BJ (cell line): ENCODE measurements at regions of chr10 and their contacts with region 1.

Region 1: GRCh38 chr10:17617031-17617911 is at the start of gene HACD1:
- DNase-seq: no peak
- H3K4me3 ChIP-seq: peak within 1 kb of the TSS; percentile 82
- H3K27me3 ChIP-seq: no peaks in the 10 kb centered on the region
- CTCF ChIP-seq: peak; percentile 47
- polyA plus RNA-seq, gene HACD1: 45.4 and 113 TPM in 2 replicates

Region 2: GRCh38 chr10:17599089-17599488 is 18.2 kb before region 1 on chr10:
- CTCF ChIA-PET with region 1: no interaction called
- POLR2A ChIA-PET with region 1: no interaction called
- DNase-seq: no peak
- H3K4me3 ChIP-seq: no peak overlapping the region
- H3K27me3 ChIP-seq: no peaks in the 10 kb centered on the region
- CTCF ChIP-seq: 0 out of 2 replicates have a peak, but pooled peaks have one; percentile 22

Region 3: DNA sequence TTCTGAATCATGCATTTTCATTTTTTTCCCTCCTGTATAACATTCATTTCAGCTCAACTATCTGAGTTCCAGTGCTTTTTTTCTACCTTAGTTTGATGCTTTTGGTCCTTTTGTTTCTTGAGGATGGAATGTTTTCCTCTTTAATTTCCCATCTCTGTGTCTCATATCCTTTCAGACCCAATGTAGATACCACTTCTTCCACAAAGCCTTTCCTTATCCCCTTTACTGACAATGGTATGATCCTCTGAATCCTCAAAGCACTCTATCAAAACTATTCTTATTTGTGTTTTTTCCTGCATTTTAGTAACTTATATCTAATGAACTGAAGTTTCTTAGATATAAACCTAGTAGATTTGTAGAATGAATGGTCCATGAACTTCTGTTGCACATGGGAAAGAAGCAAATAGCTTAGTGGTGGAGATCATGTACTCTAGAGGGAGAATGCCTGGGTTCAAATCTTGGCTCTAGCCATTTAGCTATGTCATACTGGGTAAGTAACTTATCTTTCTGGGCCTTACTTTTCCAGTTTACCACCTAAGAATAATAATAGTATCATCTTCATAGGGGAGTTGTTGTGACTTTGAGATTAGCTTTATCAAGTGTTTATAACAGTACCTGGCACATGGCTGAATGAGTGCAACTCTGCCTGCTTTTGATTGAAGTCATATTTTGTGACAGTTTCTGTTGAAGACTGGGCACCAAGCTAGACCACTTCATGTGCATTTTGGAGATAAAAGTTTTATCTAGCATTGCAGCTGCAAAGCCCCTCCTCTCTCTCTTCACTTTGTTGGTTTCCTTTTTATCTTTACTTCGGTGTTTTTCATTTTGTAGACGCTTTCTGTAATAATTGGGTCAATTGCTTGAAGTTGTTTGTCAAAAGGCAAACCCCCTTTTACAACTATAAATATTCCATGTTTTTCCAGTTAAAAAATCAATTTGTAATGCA is 45.2 kb after region 1 on chr10:
- CTCF ChIA-PET with region 1: interaction called, 3 read pairs
- POLR2A ChIA-PET with region 1: interaction called, 15 read pairs
- DNase-seq: no peak
- H3K4me3 ChIP-seq: no peak overlapping the region
- H3K27me3 ChIP-seq: no peaks in the 10 kb centered on the region
- CTCF ChIP-seq: no peak

Region 4: GRCh38 chr10:17712053-17712452 is 94.8 kb after region 1 on chr10:
- CTCF ChIA-PET with region 1: interaction called, 3 read pairs
- POLR2A ChIA-PET with region 1: interaction called, 16 read pairs
- DNase-seq: no peak
- H3K4me3 ChIP-seq: no peak overlapping the region
- H3K27me3 ChIP-seq: no peaks in the 10 kb centered on the region
- CTCF ChIP-seq: no peak

Region 5: GRCh38 chr10:17872191-17873091 is 255.2 kb after region 1 on chr10:
- CTCF ChIA-PET with region 1: no interaction called
- POLR2A ChIA-PET with region 1: interaction called, 11 read pairs
- DNase-seq: no peak
- H3K4me3 ChIP-seq: no peak overlapping the region
- H3K27me3 ChIP-seq: no peaks in the 10 kb centered on the region
- CTCF ChIP-seq: peak; percentile 48